ENCODE measurements at regions of chr6 and their contacts with region 1.

Region 1: GRCh38 chr6:75463908-75464307 is 29.7 kb downstream of the FILIP1 start:
- DNase-seq: no peak
- CTCF ChIP-seq: no peak

Region 2: GRCh38 chr6:75437421-75437891 is 26.5 kb before region 1 on chr6:
- CTCF ChIA-PET with region 1: no interaction called
- POLR2A ChIA-PET with region 1: no interaction called
- DNase-seq: no peak
- CTCF ChIP-seq: no peak

Region 3: DNA sequence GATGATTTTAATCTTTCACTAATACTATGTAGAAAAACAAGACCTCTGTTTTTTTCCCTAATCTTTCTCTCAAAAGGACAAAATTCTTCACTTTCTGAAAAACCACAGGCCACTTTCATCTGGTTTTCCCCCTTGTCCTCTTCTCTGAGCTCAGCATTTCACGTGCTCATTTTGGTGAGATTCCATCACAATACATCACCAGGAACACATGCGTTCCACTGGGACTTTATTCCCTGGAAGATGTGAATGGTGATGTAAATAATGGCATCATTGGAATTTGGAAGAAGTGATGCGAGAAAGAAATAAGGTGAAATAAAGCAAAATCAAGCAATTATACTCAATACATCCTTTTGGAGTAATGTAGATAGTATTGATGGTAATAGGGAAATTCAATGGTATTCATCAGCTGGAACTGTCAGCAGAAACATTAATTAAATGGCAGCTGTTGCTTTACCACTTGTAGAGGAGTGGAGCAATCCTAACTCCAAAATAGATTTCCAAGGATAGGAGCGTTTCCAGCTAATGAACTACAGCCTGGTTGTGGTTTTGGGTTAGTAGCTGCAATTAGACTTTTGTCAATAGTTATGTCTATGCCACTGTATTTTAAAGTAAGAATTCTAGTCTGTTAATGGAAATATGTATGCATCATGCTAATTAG is 18.2 kb after region 1 on chr6:
- CTCF ChIA-PET with region 1: interaction called, 12 read pairs
- POLR2A ChIA-PET with region 1: no interaction called
- DNase-seq: no peak
- CTCF ChIP-seq: no peak

Region 4: GRCh38 chr6:75497994-75498393 is 34.1 kb after region 1 on chr6:
- CTCF ChIA-PET with region 1: no interaction called
- POLR2A ChIA-PET with region 1: no interaction called
- DNase-seq: no peak
- CTCF ChIP-seq: no peak